ENCODE measurements at regions of chr17 and their contacts with region 1.

Region 1: DNA sequence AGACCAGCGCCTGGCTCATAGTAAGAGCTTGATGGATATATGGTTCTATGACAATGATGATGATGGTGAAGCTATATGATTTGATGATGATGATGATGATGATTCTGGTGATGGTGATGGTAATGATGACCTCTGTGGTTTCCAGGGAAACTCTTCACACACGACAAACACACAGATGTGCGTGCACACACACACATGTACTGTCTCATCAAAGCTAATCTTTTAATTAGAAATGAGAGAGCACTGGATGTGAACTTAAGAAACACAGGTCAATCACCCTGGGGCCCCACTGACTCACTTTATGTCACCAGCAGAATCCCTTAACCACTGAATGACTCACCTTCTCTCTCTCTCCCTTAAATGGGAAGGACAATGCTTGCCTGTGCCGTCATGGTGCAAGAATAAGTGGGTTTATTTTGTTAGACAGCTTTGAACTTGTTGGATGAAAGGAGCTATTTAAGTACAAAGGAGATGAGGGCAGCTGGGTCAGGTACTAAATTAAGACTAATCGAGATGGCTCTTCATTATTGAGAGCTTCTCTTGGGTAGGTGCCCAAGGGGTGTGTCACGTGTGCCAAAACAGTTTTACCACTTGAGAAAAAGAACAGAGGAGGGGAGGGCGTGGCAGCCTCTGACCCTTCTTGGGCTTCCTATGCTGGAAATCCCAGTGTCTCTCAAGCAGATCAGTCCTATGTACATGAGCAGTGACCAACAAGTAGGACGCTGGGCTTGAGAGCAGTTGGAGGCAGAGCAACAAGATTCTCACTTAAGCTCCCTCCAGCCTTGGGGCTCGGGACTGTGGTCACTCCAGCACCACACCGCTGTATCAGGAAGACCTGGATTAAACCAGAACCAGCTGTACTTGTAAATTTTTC is 6.6 kb upstream of the KRT31 start:
- H3K4me3 ChIP-seq: no peak overlapping the region
- H3K27ac ChIP-seq: no peak overlapping the region
- H3K4me1 ChIP-seq: peaks cover 13% of the 10 kb centered on the region
- CTCF ChIP-seq: no peak

Region 2: GRCh38 chr17:41417576-41418015 is 13.6 kb after region 1 on chr17:
- CTCF ChIA-PET with region 1: interaction called, 10 read pairs
- POLR2A ChIA-PET with region 1: no interaction called
- H3K4me3 ChIP-seq: no peak overlapping the region
- H3K27ac ChIP-seq: no peak overlapping the region
- H3K4me1 ChIP-seq: no peaks in the 10 kb centered on the region
- CTCF ChIP-seq: no peak

Region 3: DNA sequence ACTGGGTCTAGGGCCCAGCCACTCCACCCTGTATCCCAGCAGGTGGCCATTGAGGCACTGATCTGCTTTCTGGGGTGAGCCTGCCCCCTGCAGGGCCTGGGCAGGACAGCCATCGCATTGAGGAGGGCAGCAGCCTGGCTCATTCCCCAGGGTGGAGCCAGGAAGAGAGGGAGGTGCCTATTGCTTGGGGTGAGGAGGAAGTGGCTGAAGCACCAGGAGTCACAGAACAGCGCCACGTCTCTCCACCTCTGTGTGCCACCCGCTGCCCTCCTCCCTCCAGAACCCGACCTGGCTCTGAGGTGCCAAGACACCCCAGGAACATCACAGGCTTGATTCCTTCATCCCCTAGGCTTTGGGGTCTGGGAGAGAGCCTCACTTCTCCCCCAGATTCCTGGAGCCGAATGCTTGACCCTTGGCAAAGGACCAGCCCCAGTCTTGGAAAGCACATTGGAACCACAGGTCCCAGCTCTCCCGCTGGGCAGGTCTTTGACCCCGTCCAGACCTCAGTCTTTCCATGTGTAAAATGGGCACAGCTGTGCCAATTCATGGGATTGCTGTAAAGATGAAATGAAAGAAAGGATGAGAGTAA is 92.9 kb after region 1 on chr17:
- CTCF ChIA-PET with region 1: interaction called, 13 read pairs
- POLR2A ChIA-PET with region 1: no interaction called
- H3K4me3 ChIP-seq: no peak overlapping the region
- H3K27ac ChIP-seq: no peak overlapping the region
- H3K4me1 ChIP-seq: peaks cover 6% of the 10 kb centered on the region
- CTCF ChIP-seq: peak; percentile 95

Measured in HEK293 (cell line).